Activated T-helper 1 cell treated with anti-CD3 and anti-CD28 coated beads, Interleukin-12 subunit alpha, Interleukin-12 subunit beta, Interleukin-2, Interleukin-4 antibody, amounts not matched to agents 30 ng/mL and 10 ng/mL and 1 ng/mL, durations not matched to agents 14 hours and 24 hours and 36 hours (primary cell): ENCODE measurements at regions of chr16 and their contacts with region 1.

Region 1: GRCh38 chr16:20900299-20901067 is at the starts of genes DCUN1D3 and LYRM1:
- DNase-seq: peak; percentile 81
- H3K4me3 Mint-ChIP-seq: peak within 1 kb of the TSS; percentile 90
- H3K27ac Mint-ChIP-seq: peak within 1 kb of the TSS; percentile 100
- H3K4me1 Mint-ChIP-seq: peaks cover 76% of the 10 kb centered on the region
- H3K27me3 Mint-ChIP-seq: no peaks in the 10 kb centered on the region
- total RNA-seq, gene DCUN1D3: 14.5 and 16.7 TPM in 2 replicates
- total RNA-seq, gene LYRM1: 21.2 and 23.7 TPM in 2 replicates

Region 2: GRCh38 chr16:20806168-20807050 is 94.1 kb before region 1 on chr16 and contains the starts of genes ERI2 and REXO5:
- intact Hi-C with region 1: loop called (anchors 1 kb)
- DNase-seq: peak; percentile 71
- H3K4me3 Mint-ChIP-seq: peak within 1 kb of the TSS; percentile 98
- H3K27ac Mint-ChIP-seq: peak within 1 kb of the TSS; percentile 96
- H3K4me1 Mint-ChIP-seq: peaks cover 31% of the 10 kb centered on the region
- H3K27me3 Mint-ChIP-seq: no peaks in the 10 kb centered on the region
- total RNA-seq, gene ERI2: 13.9 and 14.2 TPM in 2 replicates
- total RNA-seq, gene REXO5: 7.7 and 8.3 TPM in 2 replicates

Region 3: GRCh38 chr16:20874088-20874581 is 26.3 kb before region 1 on chr16:
- intact Hi-C with region 1: loop called (anchors 1 kb)
- DNase-seq: no peak
- H3K4me3 Mint-ChIP-seq: peak overlapping the region; percentile 58
- H3K27ac Mint-ChIP-seq: peak overlapping the region; percentile 83
- H3K4me1 Mint-ChIP-seq: peaks cover 84% of the 10 kb centered on the region
- H3K27me3 Mint-ChIP-seq: peaks cover 2% of the 10 kb centered on the region

Region 4: GRCh38 chr16:20910781-20911321 is 10.4 kb after region 1 on chr16:
- intact Hi-C with region 1: loop called (anchors 1 kb)
- DNase-seq: no peak
- H3K4me3 Mint-ChIP-seq: peak overlapping the region; percentile 6
- H3K27ac Mint-ChIP-seq: peak overlapping the region; percentile 78
- H3K4me1 Mint-ChIP-seq: peaks cover 54% of the 10 kb centered on the region
- H3K27me3 Mint-ChIP-seq: no peaks in the 10 kb centered on the region

Region 5: GRCh38 chr16:20944861-20945574 is 44.5 kb after region 1 on chr16:
- intact Hi-C with region 1: loop called (anchors 1 kb)
- DNase-seq: peak; percentile 57
- H3K4me3 Mint-ChIP-seq: no peak overlapping the region
- H3K27ac Mint-ChIP-seq: peak overlapping the region; percentile 71
- H3K4me1 Mint-ChIP-seq: peaks cover 50% of the 10 kb centered on the region
- H3K27me3 Mint-ChIP-seq: no peaks in the 10 kb centered on the region

Region 6: GRCh38 chr16:21069986-21070385 is 169.5 kb after region 1 on chr16:
- intact Hi-C with region 1: no loop called
- DNase-seq: no peak
- H3K4me3 Mint-ChIP-seq: no peak overlapping the region
- H3K27ac Mint-ChIP-seq: no peak overlapping the region
- H3K4me1 Mint-ChIP-seq: no peaks in the 10 kb centered on the region
- H3K27me3 Mint-ChIP-seq: no peaks in the 10 kb centered on the region